ENCODE measurements at regions of chr5 and their contacts with region 1.

Region 1: GRCh38 chr5:132426525-132427138 is 57.1 kb downstream of the SLC22A5 start:
- DNase-seq: peak; percentile 91
- H3K4me3 Mint-ChIP-seq: peak overlapping the region; percentile 81
- H3K27ac Mint-ChIP-seq: peak overlapping the region; percentile 96
- H3K4me1 Mint-ChIP-seq: peaks cover 92% of the 10 kb centered on the region
- H3K27me3 Mint-ChIP-seq: no peaks in the 10 kb centered on the region

Region 2: DNA sequence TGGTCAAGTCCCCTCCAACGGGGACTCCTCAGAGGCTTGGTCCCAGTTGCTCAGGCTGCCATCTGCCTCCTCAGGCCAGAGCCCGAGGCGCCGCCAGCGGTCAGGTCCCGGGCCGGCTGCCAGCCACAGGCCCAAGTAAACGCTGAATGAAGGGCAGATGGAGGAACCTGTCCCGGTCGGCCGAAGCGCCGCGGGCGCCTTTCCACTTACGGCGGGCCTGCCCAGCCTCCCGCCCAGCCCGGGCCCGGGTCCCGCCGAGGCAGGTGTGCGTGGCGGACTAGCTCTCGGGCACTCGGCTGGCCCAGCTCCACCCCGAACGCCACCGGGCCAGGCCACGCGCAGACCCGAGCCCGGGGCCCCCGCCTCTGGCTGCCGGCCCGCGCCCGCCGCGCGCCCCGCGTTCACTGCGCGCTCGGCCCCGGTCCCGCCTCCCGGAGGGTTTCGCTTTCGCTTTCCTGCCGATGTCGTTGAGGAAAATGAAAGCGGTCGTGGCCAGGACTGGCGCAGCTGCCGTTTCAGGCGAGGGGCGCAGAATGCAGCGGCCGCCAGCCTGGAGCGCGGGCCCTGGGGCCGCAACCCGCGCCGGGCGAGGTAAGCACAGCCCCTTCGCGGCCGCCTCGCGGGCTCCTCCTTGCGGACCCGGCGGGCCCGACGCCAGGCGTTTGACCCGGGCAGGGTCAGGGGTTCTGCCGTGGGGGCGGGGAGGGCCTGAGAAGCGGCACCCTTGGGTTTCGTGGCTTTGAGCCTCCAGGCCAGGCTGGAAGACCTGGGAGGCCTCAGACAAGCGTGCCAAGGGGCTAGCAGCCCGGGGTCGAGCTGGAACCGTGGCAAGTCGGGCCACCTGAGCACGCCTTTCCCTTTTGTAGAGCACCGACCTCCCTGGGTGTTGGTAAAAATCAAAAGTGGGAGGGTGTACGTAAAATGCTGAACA is 15.9 kb before region 1 on chr5:
- intact Hi-C with region 1: loop called (anchors 1 kb)
- DNase-seq: peak; percentile 98
- H3K4me3 Mint-ChIP-seq: peak overlapping the region; percentile 100
- H3K27ac Mint-ChIP-seq: peak overlapping the region; percentile 99
- H3K4me1 Mint-ChIP-seq: peaks cover 48% of the 10 kb centered on the region
- H3K27me3 Mint-ChIP-seq: no peaks in the 10 kb centered on the region

Region 3: DNA sequence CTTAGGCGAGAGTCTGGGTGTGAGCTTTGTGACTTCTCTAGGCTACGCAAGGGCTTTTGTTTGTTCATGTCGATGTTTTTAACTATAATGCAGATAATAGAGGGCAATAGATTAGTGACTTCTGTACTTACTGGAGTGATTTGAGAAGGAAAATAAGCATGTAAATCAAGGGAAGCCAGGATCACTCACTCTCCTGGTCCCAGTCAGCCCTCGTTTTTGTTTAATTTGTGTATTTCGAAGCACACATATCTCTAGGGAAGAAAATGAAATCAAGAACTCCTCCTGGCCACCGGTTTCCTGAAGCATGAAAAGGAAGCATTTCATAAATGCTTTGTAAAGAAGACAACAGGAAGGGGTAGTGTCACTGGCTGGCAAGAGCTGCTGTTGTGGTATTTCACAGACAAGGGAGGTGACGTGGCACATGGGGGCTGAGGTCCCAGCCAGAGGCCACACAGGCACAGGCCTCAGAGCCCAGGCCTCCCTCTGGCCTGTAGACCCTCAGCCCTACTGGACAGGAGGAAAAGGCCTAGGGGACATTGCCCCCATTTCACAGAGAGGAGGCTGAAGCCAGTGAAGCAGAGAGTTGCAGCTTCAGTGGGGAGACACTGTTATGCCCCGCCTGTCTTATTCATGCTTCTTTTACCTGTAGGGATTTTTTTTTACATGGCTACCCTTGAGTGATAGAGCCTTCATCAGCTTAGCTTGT is 29.8 kb after region 1 on chr5:
- intact Hi-C with region 1: loop called (anchors 1 kb)
- DNase-seq: peak; percentile 90
- H3K4me3 Mint-ChIP-seq: peak overlapping the region; percentile 74
- H3K27ac Mint-ChIP-seq: peak overlapping the region; percentile 99
- H3K4me1 Mint-ChIP-seq: peaks cover 84% of the 10 kb centered on the region
- H3K27me3 Mint-ChIP-seq: no peaks in the 10 kb centered on the region

Region 4: DNA sequence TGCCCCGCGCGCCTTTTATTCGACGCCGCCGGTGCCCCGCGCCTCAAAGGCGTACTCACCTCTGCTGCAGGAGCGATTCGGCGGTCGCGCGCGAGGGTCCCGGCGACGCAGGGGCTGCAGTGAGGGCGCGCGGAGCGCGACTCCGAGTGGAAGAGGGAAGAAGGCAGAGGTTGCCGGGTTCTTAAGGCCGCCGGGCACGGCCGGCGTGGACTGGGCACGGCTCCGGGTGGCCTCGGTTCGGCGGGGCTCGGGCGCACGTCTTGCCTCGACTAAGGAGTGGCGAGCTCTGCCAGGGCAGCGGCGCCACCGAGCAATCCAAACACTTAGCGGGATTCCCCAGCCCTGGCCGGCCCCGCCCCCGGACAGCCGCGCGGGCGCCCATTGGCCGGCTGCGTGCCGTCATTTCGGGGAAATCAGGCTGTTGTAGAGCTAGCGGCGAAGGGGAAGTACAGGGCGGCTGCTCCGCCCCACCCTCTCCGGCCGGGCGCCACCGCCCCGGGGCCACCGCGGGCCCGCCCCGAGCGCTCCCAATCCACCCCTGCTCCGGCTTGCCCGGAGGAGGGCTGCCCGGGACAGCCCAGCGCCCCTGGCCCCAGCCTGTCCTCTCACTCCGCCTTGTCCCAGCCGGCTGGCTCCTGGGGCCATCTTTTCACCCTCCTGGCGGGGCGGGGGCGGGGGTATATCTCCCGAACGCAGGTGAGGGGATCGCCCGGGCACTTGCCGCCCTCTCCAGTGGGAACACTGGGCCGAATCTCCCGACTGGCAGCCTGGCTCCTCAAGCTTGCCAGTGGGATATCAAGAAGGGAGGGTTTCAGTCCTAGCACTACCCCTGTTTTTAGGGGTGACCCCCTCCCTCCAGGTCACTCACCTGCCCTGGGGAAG is 64.1 kb after region 1 on chr5 and contains the start of gene IRF1:
- intact Hi-C with region 1: loop called (anchors 1 kb)
- DNase-seq: peak; percentile 100
- H3K4me3 Mint-ChIP-seq: peak within 1 kb of the TSS; percentile 99
- H3K27ac Mint-ChIP-seq: peak within 1 kb of the TSS; percentile 94
- H3K4me1 Mint-ChIP-seq: peaks cover 70% of the 10 kb centered on the region
- H3K27me3 Mint-ChIP-seq: no peaks in the 10 kb centered on the region
- total RNA-seq, gene IRF1: 167 and 181 TPM in 2 replicates